ENCODE measurements at regions of chr15 and their contacts with region 1.

Region 1: DNA sequence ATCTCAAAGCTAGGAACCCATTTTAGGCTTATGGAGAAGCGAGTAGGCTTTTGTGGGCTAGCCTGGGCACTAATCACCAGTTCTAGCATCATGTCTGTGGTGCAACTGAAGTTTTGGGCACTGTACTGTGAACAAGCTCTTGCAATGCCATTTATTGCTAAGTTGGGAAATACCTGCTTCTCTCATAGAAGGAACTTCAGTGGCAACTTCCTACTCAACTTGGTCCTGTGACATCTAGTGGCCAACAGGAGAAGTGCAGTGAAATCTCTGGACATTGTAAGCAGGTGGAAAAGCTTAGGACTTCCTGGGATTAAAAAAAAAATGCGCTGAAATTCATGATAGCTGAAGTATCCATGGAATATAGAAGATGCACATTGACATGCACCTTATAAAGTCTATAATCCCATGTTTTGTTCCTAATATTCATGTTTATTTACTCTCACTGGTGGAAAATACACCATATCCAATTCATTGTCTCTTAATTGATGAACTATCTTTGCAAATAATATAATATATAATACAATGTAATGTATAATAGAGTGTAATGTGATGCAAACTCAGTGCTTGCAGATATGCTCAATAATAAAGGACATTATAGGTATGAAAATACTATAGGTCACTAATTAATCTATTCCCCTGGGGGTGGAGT is 6.5 kb upstream of the ALDH1A3 start:
- DNase-seq: peak; percentile 72
- H3K4me3 ChIP-seq: no peak overlapping the region
- H3K27ac ChIP-seq: no peak overlapping the region
- H3K27me3 ChIP-seq: peaks cover 7% of the 10 kb centered on the region
- CTCF ChIP-seq: peak; percentile 95

Region 2: GRCh38 chr15:100627789-100628395 is 245.3 kb before region 1 on chr15:
- CTCF ChIA-PET with region 1: interaction called, 40 read pairs
- POLR2A ChIA-PET with region 1: no interaction called
- DNase-seq: peak; percentile 56
- H3K4me3 ChIP-seq: no peak overlapping the region
- H3K27ac ChIP-seq: no peak overlapping the region
- H3K27me3 ChIP-seq: no peaks in the 10 kb centered on the region
- CTCF ChIP-seq: peak; percentile 78

Region 3: GRCh38 chr15:100671858-100672543 is 201.2 kb before region 1 on chr15:
- CTCF ChIA-PET with region 1: interaction called, 39 read pairs
- POLR2A ChIA-PET with region 1: no interaction called
- DNase-seq: no peak
- H3K4me3 ChIP-seq: no peak overlapping the region
- H3K27ac ChIP-seq: no peak overlapping the region
- H3K27me3 ChIP-seq: no peaks in the 10 kb centered on the region
- CTCF ChIP-seq: peak; percentile 72

Region 4: DNA sequence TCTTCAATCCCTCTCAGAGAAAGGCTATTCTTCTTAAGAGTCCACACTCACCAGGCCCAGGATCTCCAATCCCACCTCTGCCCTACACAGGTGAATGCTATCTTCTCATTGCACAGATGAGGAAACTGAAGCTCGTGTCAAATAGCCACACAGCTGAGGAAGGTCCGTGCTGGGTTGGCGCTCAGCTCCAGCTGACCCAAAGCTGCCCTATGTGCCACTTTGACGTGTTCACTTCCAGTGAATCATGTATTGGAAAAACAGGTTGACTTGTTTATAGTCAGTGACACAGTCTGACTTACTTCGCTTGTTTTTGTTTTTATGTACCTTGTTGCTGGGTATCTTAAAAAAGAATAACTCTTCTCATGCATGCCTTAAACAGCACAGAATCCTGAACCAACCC is 26.0 kb before region 1 on chr15:
- CTCF ChIA-PET with region 1: interaction called, 10 read pairs
- POLR2A ChIA-PET with region 1: no interaction called
- DNase-seq: no peak
- H3K4me3 ChIP-seq: no peak overlapping the region
- H3K27ac ChIP-seq: no peak overlapping the region
- H3K27me3 ChIP-seq: no peaks in the 10 kb centered on the region
- CTCF ChIP-seq: no peak

Region 5: GRCh38 chr15:100889385-100890050 is 16.4 kb after region 1 on chr15:
- CTCF ChIA-PET with region 1: interaction called, 12 read pairs
- POLR2A ChIA-PET with region 1: no interaction called
- DNase-seq: peak; percentile 69
- H3K4me3 ChIP-seq: no peak overlapping the region
- H3K27ac ChIP-seq: peak overlapping the region; percentile 65
- H3K27me3 ChIP-seq: no peaks in the 10 kb centered on the region
- CTCF ChIP-seq: no peak